PC-3 (cell line): ENCODE measurements at regions of chr20 and their contacts with region 1.

Region 1: DNA sequence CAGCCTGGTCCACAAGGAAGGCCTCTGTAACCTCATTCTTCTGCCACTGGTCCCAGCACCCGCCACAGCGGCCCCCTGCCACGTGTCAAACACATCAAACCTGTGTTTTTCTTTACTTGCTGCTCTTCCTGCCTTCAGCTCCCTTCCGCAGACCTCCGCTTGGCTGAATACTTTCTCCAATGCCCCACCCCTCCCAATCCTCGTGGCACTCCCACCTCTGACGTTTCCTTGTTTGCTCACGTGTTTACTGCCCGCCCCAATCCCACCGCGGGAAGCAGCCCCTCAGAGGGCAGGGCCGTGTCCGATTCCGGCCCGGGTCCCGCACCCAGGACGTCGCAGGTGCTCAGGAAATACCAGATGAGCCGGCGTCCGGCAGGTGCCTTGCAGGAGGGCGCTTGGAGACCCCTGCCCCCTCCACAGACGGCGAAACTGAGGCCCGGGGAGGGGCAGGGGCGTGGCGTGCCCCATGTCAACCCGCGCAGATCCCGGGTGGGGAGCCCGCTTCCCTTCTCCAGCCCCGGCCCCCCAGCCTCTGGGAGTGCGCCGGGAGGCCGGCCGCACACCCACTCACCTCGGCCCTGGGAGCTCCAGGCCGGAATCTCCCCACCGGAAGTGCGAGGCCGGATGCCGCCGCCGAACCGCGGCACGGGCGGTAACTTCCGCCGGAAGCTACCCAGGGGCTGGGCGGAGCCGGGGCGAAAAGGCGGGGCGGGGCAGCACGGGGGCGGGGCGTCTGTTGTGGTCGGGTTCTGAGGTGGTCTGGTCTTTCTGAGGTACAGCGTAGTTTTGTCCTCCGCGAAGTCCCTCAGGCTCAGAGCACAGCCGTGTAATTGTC is 42.4 kb downstream of the ELMO2 start:
- DNase-seq: peak; percentile 88
- ATAC-seq: peak; percentile 90
- H3K4me3 ChIP-seq: peak overlapping the region; percentile 90
- H3K27ac ChIP-seq: peak overlapping the region; percentile 91
- H3K4me1 ChIP-seq: peaks cover 27% of the 10 kb centered on the region
- H3K27me3 ChIP-seq: no peaks in the 10 kb centered on the region
- CTCF ChIP-seq: no peak

Region 2: DNA sequence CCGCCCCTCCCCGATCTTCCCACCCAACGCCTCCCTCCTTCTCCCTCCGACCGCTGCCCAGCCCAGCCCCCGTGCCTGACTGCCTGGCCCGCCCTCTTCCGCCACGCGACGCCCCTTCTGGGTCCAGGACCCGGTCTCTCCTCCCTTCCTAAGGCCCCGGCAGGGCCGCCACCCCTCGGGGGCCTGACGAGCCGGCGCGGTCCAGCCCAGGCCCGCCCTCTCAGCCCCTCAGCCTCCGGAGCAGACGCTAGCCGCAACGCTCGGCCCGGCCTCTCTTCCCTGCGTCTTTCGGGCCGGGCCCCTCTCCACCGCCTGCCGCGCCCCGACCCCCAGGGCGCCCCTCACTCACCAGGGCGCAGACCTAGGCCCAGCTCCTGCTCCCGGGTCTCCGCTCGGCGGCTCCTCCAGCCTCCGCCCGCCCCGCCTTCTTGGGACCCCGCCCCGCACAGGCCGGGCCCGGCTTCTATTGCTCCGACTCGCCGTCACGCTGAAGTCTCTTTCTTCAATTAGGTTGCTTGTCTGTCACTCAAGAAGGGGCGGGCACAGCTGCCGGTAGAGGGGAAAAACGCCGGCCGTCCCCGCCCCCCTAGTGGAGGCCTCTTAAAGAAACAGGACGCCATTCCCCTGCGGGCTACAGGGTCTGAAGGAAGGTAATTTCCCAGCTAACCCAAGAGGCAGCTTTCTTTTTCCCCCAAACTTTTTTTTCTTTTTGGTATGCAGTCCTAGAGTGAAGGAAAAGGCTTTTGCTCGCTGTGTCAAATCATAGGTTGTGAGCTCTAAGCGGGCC is 42.4 kb after region 1 on chr20 and contains the start of gene ELMO2:
- CTCF ChIA-PET with region 1: interaction called, 7 read pairs
- POLR2A ChIA-PET with region 1: interaction called, 4 read pairs
- intact Hi-C with region 1: loop called (anchors 1 kb)
- DNase-seq: peak; percentile 98
- ATAC-seq: peak; percentile 83
- H3K4me3 ChIP-seq: peak within 1 kb of the TSS; percentile 92
- H3K27ac ChIP-seq: 0 out of 2 replicates have a peak within 1 kb of the TSS, but pooled peaks have one; percentile 12
- H3K4me1 ChIP-seq: peaks cover 39% of the 10 kb centered on the region
- H3K27me3 ChIP-seq: no peaks in the 10 kb centered on the region
- CTCF ChIP-seq: no peak
- total RNA-seq, gene ELMO2: 29.0 and 32.3 TPM in 2 replicates

Region 3: GRCh38 chr20:46894971-46895905 is 531.2 kb after region 1 on chr20:
- CTCF ChIA-PET with region 1: no interaction called
- POLR2A ChIA-PET with region 1: no interaction called
- intact Hi-C with region 1: no loop called
- DNase-seq: peak; percentile 31
- ATAC-seq: no peak
- H3K4me3 ChIP-seq: no peak overlapping the region
- H3K27ac ChIP-seq: no peak overlapping the region
- H3K4me1 ChIP-seq: no peaks in the 10 kb centered on the region; the same call in 1 of the 2 replicates
- H3K27me3 ChIP-seq: peaks cover 79% of the 10 kb centered on the region
- CTCF ChIP-seq: no peak